ENCODE measurements at regions of chr1 and their contacts with region 1.

Region 1: DNA sequence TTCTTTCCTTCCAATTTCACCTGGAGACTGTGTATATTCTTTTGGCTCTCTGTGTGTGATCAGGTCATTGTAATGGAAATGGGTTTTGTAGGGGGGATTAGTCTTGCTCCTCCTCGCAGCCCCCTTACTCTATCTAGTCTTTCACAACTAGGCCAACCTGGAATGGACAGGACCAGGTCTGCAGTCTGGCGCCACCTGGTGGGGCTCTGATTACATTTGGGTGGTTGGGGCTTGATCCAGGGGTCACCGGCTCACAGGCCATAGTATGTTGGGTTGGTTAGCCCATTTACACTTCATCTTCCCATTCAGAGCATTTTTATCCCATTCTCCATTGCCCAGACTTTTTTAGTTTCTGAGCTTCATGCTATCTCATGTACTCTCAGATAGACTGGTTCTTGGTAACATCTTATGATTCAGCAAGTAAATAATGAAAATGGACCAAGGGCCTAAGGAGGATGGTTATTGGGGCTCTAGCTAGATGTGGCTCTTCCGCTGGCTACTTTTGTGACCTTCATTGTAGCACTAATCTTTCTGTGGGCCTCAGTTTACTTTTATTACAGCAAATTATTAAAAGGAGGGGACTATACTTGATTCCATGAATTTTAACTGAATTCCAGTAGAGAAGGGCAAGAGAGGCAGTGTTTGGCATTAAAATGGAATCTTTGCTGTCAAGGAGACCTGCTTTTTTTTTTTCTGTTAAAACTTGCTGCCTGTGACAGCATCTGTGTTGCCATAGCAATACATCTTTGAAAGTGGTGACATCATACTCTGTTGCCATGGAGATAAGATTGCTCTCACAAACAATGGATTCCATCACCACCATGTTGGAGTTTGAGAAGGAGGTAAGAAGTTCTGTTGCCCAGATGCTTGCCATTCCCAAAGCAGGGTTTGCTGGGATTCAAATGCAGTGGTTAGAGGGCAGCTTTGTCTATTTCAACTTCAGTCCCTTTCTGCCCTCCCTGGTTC is 150.1 kb downstream of the PLXNA2 start:
- DNase-seq: peak; percentile 58
- H3K4me3 ChIP-seq: no peak overlapping the region
- H3K27ac ChIP-seq: no peak overlapping the region
- H3K4me1 ChIP-seq: no peaks in the 10 kb centered on the region
- H3K27me3 ChIP-seq: no peaks in the 10 kb centered on the region
- CTCF ChIP-seq: peak; percentile 56 to 72 (median 68)
- POLR2A ChIP-seq: no peak

Region 2: DNA sequence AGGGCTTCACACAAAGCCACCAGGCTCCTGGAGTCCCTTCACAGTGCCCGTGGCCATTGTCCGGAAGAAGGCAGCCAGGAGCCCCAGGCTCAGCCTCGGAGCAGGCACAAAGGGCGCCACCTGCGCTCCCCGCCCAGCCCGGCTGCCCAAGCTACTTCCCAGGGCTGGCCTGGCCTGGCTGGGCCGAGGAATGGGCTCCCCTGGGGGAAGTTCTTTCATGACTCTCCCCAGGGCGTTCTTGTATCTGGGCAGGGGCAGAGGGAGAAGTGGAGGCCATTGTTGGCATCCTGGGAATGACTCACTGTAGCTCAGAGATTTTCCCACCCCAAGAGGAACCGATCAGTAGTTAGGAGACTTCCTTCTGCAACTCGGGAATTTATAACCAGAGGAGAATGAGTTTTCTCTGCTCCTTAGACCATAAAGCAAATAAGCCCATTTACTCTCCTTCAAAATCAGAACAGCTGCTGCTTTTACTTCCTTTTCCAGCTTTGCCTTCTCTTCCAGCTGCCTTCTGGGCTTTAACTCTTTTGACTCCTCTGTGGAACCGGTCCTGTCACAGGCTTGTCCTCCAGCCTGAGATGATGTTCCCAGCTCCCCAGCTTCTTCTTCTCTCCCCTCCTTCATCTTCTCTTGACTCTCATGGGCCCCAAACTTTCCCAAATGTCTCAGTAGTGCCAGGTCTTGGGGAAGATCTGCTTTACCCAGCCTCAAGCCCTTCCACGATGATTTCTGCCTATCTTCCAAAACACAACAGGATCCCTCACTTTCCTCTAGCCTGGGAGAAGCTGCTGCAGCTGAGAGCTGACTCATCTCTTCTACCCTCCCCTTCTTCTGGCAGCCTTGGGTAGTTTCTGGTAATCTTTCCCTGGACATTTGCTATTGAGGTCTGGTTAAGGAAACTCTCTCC is 64.4 kb before region 1 on chr1:
- intact Hi-C with region 1: loop called (anchors 5 kb)
- DNase-seq: no peak
- H3K4me3 ChIP-seq: no peak overlapping the region
- H3K27ac ChIP-seq: peak overlapping the region; percentile 9 to 42
- H3K4me1 ChIP-seq: no peaks in the 10 kb centered on the region
- H3K27me3 ChIP-seq: no peaks in the 10 kb centered on the region
- CTCF ChIP-seq: no peak
- POLR2A ChIP-seq: no peak

Region 3: DNA sequence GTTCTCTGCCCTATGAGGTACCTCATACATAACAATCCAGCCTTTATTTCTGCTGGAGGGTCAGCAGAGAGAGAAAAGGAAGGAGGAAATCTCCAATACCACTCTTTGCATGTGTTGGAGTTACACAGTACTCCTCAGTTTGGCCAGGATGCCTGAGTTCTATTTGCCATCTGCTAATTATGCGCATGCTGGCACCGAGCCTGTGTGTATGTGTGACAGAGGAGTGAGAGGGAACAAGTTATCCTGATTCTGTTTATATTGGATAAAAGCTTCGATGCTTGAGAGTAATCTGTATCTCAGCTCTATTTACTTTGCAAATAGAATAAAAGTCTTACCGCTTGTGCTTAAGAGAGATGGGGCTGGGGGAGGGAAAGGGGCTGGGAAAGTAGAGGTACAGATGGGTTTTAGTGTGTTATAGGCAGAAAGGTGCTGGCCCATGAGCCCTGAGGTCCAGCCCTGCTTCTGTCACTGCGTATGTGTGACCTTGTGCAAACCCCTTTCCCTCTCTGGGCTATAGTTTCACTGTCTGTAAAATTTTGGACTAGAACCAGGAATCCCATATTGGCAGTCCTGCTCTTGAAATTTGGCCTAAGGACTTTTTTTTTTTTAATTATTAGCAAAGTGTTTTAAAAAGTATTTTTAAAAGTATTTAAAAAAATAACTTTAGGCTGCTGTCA is 204.7 kb after region 1 on chr1:
- intact Hi-C with region 1: no loop called
- DNase-seq: peak; percentile 89
- H3K4me3 ChIP-seq: no peak overlapping the region
- H3K27ac ChIP-seq: peak overlapping the region in 1 of 2 donors; percentile 57
- H3K4me1 ChIP-seq: peaks cover 10% of the 10 kb centered on the region
- H3K27me3 ChIP-seq: no peaks in the 10 kb centered on the region
- CTCF ChIP-seq: no peak
- POLR2A ChIP-seq: no peak